PC-3 (cell line): ENCODE measurements at regions of chr6 and their contacts with region 1.

Region 1: DNA sequence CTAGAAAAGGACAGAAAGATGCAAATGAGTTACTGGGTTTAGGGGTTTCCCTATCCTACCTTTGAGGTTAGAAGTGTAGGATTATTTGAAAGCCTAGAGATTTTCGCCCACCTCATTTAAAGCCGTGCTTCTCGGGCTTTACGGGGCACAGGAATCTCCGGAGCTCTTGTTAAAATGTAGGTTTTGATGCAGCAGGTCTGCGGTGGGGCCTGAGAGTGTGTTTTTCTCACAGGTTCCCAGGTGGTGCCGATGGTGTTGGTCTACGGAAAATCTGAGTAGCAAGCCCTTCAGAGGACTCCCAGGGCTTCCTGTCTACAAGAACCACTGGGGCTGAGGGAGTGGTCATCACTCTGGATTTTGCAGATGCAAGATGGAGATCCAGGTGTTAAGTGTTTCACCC is 47.5 kb downstream of the TRAM2 start:
- DNase-seq: no peak
- ATAC-seq: no peak
- H3K4me3 ChIP-seq: no peak overlapping the region
- H3K27ac ChIP-seq: no peak overlapping the region
- H3K4me1 ChIP-seq: peaks cover 10% of the 10 kb centered on the region; the same call in 1 of the 2 replicates
- H3K27me3 ChIP-seq: no peaks in the 10 kb centered on the region
- CTCF ChIP-seq: no peak

Region 2: DNA sequence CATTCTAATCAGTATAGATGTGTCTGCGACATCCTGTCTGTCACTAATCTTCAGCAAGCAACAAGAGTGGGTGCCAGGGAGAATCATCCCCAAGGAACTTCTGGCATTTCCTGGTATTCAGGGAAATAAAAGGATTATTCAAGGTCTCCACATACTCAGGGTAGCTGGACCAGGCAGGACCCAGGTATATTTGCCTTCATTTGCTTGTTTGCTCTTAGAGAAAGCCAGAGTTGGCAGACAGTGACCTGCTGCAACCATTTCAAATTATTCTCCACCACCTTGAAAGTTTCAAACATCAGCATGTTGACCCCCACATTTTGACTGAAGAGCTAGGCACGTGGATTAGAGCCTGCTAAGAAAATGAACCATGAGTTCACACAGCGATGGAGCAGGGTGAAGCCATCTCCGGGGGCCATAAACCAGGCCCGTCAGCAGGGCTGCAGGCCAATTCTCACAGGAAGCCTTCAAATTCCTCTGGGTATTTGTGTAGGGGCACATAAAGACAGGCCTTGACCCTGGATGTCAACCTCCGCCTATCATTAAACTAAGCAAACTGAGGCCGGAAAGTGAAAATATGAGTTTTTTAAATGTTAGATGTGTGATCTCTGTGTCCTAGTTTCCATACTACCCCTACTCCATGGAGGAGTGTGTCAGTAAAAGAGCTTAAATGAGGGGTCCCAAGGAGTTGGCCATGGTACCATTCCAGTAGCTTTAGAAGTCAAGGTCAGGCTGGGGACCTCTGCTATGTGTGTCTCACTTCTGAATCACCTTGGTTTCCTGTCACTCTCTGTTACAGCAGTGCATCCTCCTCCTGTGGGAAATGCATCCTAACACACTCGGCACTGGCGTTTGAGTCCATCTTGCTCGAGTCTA is 14.7 kb after region 1 on chr6:
- CTCF ChIA-PET with region 1: no interaction called
- POLR2A ChIA-PET with region 1: interaction called, 21 read pairs
- intact Hi-C with region 1: no loop called
- DNase-seq: peak; percentile 60
- ATAC-seq: peak; percentile 53
- H3K4me3 ChIP-seq: peak overlapping the region; percentile 17; the same call in 1 of the 2 replicates
- H3K27ac ChIP-seq: peak overlapping the region; percentile 47
- H3K4me1 ChIP-seq: peaks cover 67% of the 10 kb centered on the region
- H3K27me3 ChIP-seq: no peaks in the 10 kb centered on the region
- CTCF ChIP-seq: no peak